Vagina (tissue), 2 donors: ENCODE measurements at regions of chr20 and their contacts with region 1.

Region 1: GRCh38 chr20:50027611-50028105 is 44.9 kb downstream of the SNAI1 start:
- DNase-seq: no peak
- H3K4me3 ChIP-seq: no peak overlapping the region
- H3K27ac ChIP-seq: peak overlapping the region; percentile 1
- H3K4me1 ChIP-seq: peaks cover 26% of the 10 kb centered on the region
- H3K27me3 ChIP-seq: no peaks in the 10 kb centered on the region
- CTCF ChIP-seq: no peak
- POLR2A ChIP-seq: no peak

Region 2: GRCh38 chr20:49989234-49990065 is 38.2 kb before region 1 on chr20:
- intact Hi-C with region 1: loop called (anchors 5 kb)
- DNase-seq: no peak
- H3K4me3 ChIP-seq: no peak overlapping the region
- H3K27ac ChIP-seq: peak overlapping the region; percentile 57
- H3K4me1 ChIP-seq: peaks cover 60% of the 10 kb centered on the region
- H3K27me3 ChIP-seq: no peaks in the 10 kb centered on the region
- CTCF ChIP-seq: no peak
- POLR2A ChIP-seq: no peak